Caco-2 (cell line): ENCODE measurements at regions of chr2 and their contacts with region 1.

Region 1: DNA sequence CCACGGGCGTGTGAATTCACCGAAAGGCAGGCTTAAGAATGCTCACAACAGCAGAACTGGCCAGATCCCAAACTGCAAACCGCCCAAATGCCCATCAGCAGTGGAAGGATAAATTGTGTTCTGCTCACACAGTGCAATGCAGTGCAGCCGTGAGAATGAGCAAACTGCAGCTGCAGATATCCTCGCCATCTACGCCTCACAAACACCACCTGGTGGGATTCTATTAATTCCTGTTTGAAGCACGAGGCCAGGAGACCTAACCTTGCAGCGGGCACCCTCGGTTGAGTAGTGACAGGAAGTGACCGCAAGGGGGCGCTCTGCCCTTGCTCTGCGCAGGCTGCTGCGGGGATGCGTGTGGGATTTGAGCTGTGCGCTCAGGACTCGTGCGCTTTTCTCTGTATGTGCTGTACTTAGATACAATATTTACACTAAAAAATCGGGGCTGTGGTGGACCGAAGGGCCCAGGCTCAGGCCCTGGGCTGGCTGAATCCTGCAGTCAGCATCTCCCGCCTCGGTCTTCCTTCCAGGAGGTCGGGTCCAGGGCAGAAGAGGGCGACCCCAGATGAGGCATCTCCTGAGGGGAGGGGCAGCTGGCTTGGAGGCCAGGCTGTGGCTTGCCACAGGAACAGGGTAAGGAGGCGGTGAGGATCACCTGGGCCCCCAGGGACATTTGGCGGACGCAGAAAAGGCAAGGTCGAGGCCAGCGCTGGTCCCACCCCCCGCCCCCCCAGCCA is 19.8 kb upstream of the PDIA6 start:
- DNase-seq: peak; percentile 85 to 92
- H3K4me3 ChIP-seq: no peak overlapping the region
- H3K4me3 Mint-ChIP-seq: no peak overlapping the region
- H3K27ac Mint-ChIP-seq: no peak overlapping the region
- H3K4me1 ChIP-seq: no peaks in the 10 kb centered on the region
- H3K4me1 Mint-ChIP-seq: no peaks in the 10 kb centered on the region
- H3K27me3 ChIP-seq: no peaks in the 10 kb centered on the region
- H3K27me3 Mint-ChIP-seq: peaks cover 15% of the 10 kb centered on the region
- CTCF ChIP-seq: peak; percentile 98

Region 2: GRCh38 chr2:10709290-10709939 is 123.0 kb before region 1 on chr2:
- CTCF ChIA-PET with region 1: interaction called, 4 read pairs
- POLR2A ChIA-PET with region 1: no interaction called
- intact Hi-C with region 1: loop called (anchors 1 kb)
- DNase-seq: peak; percentile 72 to 78
- H3K4me3 ChIP-seq: no peak overlapping the region
- H3K4me3 Mint-ChIP-seq: peak overlapping the region; percentile 17
- H3K27ac Mint-ChIP-seq: no peak overlapping the region
- H3K4me1 ChIP-seq: no peaks in the 10 kb centered on the region
- H3K4me1 Mint-ChIP-seq: peaks cover 12% of the 10 kb centered on the region
- H3K27me3 ChIP-seq: no peaks in the 10 kb centered on the region
- H3K27me3 Mint-ChIP-seq: peaks cover 9% of the 10 kb centered on the region
- CTCF ChIP-seq: peak; percentile 61 to 87

Region 3: DNA sequence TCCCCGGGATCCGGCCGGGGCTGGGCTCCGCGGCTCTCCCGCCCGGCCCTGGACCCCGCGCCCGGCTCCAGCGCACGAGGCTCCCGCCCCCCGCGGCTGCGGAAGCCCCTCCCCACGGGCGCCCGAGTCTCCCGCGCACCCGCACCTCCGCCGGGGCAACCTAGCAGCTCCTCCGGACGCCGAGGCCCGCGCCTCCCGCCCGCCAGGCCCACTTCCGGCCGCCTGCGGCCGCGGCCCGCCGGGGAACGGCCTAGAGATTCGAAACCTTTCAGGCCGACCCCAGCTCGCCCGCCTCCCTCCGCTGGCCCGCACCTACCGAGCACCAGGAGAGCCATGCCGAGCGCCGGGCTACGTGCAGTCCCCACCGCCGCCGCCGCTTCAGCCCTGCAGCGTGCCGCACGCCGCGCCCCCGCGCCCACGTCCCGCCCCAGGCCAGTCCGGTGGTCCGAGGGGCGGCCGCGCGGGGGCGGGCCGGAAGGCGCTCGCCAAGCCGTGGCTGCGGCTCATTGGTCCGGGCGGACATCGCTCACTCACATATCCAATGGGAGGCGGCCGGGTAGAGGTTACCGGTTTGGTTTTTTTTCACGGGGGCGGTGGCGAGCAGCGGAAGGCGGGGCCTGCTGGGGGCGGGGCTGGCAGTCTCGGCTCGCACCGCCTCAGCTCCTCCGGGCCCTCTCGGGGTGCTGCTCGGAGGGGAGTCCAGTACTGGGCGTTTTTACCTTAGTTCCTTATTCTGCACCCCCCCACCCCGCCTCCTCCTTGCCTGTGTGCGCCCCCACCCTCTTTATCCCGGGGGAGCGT is 19.8 kb before region 1 on chr2 and contains the start of gene PDIA6:
- CTCF ChIA-PET with region 1: interaction called, 12 read pairs
- POLR2A ChIA-PET with region 1: no interaction called
- intact Hi-C with region 1: no loop called
- DNase-seq: peak; percentile 98 to 99
- H3K4me3 ChIP-seq: peak within 1 kb of the TSS; percentile 83
- H3K4me3 Mint-ChIP-seq: peak within 1 kb of the TSS; percentile 81
- H3K27ac Mint-ChIP-seq: peak within 1 kb of the TSS; percentile 83
- H3K4me1 ChIP-seq: peaks cover 8% of the 10 kb centered on the region; the same call in 1 of the 2 replicates
- H3K4me1 Mint-ChIP-seq: peaks cover 22% of the 10 kb centered on the region
- H3K27me3 ChIP-seq: no peaks in the 10 kb centered on the region
- H3K27me3 Mint-ChIP-seq: peaks cover 5% of the 10 kb centered on the region
- CTCF ChIP-seq: no peak
- total RNA-seq, gene PDIA6: 379 and 384 TPM in 2 replicates

Region 4: DNA sequence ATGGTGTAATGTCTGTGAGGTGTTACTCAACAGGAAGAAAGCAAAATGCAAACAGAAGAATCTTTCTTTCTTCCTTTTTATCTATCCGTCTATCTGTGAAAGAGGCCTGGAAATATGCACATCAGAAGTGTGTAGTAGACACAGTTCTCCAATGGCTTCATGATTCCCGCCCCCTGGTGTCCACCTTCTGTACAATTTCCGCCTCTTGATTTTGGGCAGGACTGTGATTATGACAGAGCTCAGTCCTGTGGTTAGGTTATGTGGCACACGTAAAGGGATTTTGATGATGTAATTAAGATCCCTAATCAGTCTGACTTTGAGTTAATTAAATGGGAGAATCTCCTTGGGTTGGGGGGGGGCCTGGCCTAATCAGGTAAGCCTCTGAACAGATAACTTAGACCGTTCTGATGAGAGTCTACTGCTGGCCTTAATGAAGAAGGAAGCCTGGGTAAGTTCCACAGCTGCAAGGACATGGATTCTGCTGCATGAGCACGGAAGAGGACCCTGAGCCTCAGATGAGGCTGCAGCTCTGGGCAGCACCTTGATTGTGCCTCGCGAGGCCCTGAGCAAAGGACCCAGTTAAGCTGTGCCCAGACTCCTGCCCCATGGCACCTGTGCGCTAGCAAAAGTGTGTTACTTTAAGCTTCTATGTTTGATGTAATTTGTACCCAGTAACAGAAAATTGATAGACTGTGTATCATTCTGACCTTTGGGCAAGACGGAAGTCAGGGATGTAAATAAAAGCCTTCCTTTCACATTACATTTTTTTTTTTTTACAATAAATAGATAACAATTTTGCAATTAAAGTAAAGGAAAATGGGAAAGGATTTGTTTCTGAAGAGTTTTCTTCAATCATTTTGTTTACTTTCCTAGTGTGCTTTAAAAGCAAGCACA is 68.1 kb after region 1 on chr2:
- CTCF ChIA-PET with region 1: interaction called, 39 read pairs
- POLR2A ChIA-PET with region 1: no interaction called
- intact Hi-C with region 1: loop called (anchors 1 kb)
- DNase-seq: peak; percentile 70 to 81
- H3K4me3 ChIP-seq: no peak overlapping the region
- H3K4me3 Mint-ChIP-seq: no peak overlapping the region
- H3K27ac Mint-ChIP-seq: no peak overlapping the region
- H3K4me1 ChIP-seq: no peaks in the 10 kb centered on the region
- H3K4me1 Mint-ChIP-seq: peaks cover 7% of the 10 kb centered on the region
- H3K27me3 ChIP-seq: no peaks in the 10 kb centered on the region
- H3K27me3 Mint-ChIP-seq: peaks cover 2% of the 10 kb centered on the region
- CTCF ChIP-seq: peak; percentile 60 to 75

Region 5: GRCh38 chr2:10911261-10912075 is 79.1 kb after region 1 on chr2 and contains the start of gene KCNF1:
- CTCF ChIA-PET with region 1: interaction called, 14 read pairs
- POLR2A ChIA-PET with region 1: no interaction called
- intact Hi-C with region 1: no loop called
- DNase-seq: peak; percentile 64 to 72
- H3K4me3 ChIP-seq: peak within 1 kb of the TSS; percentile 42
- H3K4me3 Mint-ChIP-seq: peak within 1 kb of the TSS; percentile 58
- H3K27ac Mint-ChIP-seq: no peak within 1 kb of the TSS
- H3K4me1 ChIP-seq: no peaks in the 10 kb centered on the region
- H3K4me1 Mint-ChIP-seq: peaks cover 7% of the 10 kb centered on the region
- H3K27me3 ChIP-seq: no peaks in the 10 kb centered on the region
- H3K27me3 Mint-ChIP-seq: peaks cover 10% of the 10 kb centered on the region
- CTCF ChIP-seq: peak; percentile 25 to 26
- total RNA-seq, gene KCNF1: 0.28 and 0.29 TPM in 2 replicates

Region 6: GRCh38 chr2:11028406-11028916 is 196.1 kb after region 1 on chr2:
- CTCF ChIA-PET with region 1: interaction called, 4 read pairs
- POLR2A ChIA-PET with region 1: no interaction called
- intact Hi-C with region 1: loop called (anchors 2 kb)
- DNase-seq: no peak
- H3K4me3 ChIP-seq: no peak overlapping the region
- H3K4me3 Mint-ChIP-seq: no peak overlapping the region
- H3K27ac Mint-ChIP-seq: no peak overlapping the region
- H3K4me1 ChIP-seq: no peaks in the 10 kb centered on the region
- H3K4me1 Mint-ChIP-seq: no peaks in the 10 kb centered on the region
- H3K27me3 ChIP-seq: no peaks in the 10 kb centered on the region
- H3K27me3 Mint-ChIP-seq: no peaks in the 10 kb centered on the region
- CTCF ChIP-seq: peak in 1 of 2 experiments; percentile 50

Region 7: GRCh38 chr2:11124503-11125068 is 292.2 kb after region 1 on chr2:
- CTCF ChIA-PET with region 1: interaction called, 29 read pairs
- POLR2A ChIA-PET with region 1: no interaction called
- intact Hi-C with region 1: loop called (anchors 1 kb)
- DNase-seq: peak; percentile 76 to 88
- H3K4me3 ChIP-seq: no peak overlapping the region
- H3K4me3 Mint-ChIP-seq: no peak overlapping the region
- H3K27ac Mint-ChIP-seq: no peak overlapping the region
- H3K4me1 ChIP-seq: peaks cover 3% of the 10 kb centered on the region; the same call in 1 of the 2 replicates
- H3K4me1 Mint-ChIP-seq: peaks cover 7% of the 10 kb centered on the region
- H3K27me3 ChIP-seq: no peaks in the 10 kb centered on the region
- H3K27me3 Mint-ChIP-seq: no peaks in the 10 kb centered on the region
- CTCF ChIP-seq: peak; percentile 88 to 89

Region 8: GRCh38 chr2:11224887-11225286 is 392.5 kb after region 1 on chr2:
- CTCF ChIA-PET with region 1: no interaction called
- POLR2A ChIA-PET with region 1: no interaction called
- intact Hi-C with region 1: no loop called
- DNase-seq: no peak
- H3K4me3 ChIP-seq: no peak overlapping the region
- H3K4me3 Mint-ChIP-seq: no peak overlapping the region
- H3K27ac Mint-ChIP-seq: no peak overlapping the region
- H3K4me1 ChIP-seq: no peaks in the 10 kb centered on the region
- H3K4me1 Mint-ChIP-seq: no peaks in the 10 kb centered on the region
- H3K27me3 ChIP-seq: no peaks in the 10 kb centered on the region
- H3K27me3 Mint-ChIP-seq: no peaks in the 10 kb centered on the region
- CTCF ChIP-seq: no peak